MCF 10A (cell line): ENCODE measurements at regions of chr4 and their contacts with region 1.

Region 1: DNA sequence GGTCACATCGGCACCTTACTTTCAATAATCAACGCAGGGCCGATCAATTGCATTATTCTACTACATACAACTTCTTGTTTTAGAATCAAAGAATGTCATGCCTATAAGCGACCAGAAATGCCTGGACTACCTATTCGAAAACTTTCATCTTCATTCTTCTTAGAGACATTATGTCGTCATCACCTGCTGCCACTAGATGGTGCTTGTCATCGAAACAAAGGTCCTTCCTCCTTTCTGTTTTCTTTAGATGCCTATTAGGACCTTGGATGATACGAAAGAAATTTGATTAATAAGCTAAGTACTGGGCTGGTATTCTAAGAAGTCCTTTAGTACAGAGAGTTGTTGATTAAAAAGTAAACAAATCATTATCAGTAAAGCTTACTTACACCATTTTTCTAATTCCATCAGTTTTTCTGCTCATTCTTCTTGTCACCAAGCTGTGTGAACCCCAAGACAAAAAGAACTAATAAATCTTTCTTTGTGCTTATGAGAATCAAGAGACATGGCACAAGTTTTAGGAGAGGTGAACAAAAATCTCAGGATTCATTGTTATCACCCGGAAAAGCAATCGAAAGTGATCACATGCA is 154.5 kb upstream of the SLC4A4 start:
- DNase-seq: peak; percentile 68
- H3K4me3 Mint-ChIP-seq: no peak overlapping the region
- H3K27ac Mint-ChIP-seq: no peak overlapping the region
- H3K4me1 Mint-ChIP-seq: no peaks in the 10 kb centered on the region
- H3K27me3 Mint-ChIP-seq: peaks cover 25% of the 10 kb centered on the region
- CTCF ChIP-seq: peak; percentile 56

Region 2: DNA sequence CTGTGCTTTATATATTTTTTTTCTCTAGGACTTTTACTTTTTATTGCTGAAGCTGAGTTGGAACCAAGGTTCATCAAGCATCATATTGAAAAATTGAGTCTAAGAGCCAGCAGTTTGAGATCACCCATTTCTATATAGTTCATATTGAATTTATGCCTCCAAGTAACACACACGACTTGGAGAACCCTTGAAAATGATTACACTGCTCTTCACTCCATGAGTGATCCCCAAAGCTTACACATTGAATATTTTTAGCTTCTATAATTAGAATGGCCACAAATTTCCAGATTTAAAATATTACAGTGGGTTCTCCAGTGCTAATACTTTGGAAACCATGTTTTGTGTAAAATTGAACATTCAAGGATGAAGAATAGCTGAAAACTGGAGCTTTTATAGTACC is 10.2 kb after region 1 on chr4:
- CTCF ChIA-PET with region 1: interaction called, 13 read pairs
- POLR2A ChIA-PET with region 1: no interaction called
- intact Hi-C with region 1: no loop called
- DNase-seq: no peak
- H3K4me3 Mint-ChIP-seq: no peak overlapping the region
- H3K27ac Mint-ChIP-seq: no peak overlapping the region
- H3K4me1 Mint-ChIP-seq: no peaks in the 10 kb centered on the region
- H3K27me3 Mint-ChIP-seq: peaks cover 18% of the 10 kb centered on the region
- CTCF ChIP-seq: no peak